Right lobe of liver (tissue), 6 donors: ENCODE measurements at regions of chr19 and their contacts with region 1.

Region 1: DNA sequence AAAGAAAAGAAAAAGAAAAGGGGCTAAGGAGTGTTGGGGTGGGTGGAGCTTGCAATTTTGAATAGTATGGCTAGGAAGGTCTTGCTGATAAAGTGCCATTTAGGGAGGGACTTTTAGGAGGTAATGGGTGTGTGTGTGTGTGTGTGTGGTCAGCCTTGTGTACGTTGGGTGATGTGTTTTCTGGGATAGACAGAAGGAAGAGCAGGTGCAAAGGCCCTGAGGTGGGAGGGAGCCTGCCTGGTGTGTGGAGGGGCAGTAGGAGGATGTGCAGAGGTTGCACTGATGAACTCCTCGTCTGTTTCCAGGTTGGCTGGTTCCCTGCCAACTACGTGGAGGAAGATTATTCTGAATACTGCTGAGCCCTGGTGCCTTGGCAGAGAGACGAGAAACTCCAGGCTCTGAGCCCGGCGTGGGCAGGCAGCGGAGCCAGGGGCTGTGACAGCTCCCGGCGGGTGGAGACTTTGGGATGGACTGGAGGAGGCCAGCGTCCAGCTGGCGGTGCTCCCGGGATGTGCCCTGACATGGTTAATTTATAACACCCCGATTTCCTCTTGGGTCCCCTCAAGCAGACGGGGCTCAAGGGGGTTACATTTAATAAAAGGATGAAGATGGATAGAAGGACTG is 30.5 kb upstream of the ADGRE1 start:
- DNase-seq: no peak
- ATAC-seq: peak in 3 of 4 donors; percentile 13 to 37 (median 14)
- H3K4me3 ChIP-seq: no peak overlapping the region
- H3K27ac ChIP-seq: no peak overlapping the region
- H3K4me1 ChIP-seq: no peaks in the 10 kb centered on the region
- H3K27me3 ChIP-seq: no peaks in the 10 kb centered on the region
- CTCF ChIP-seq: no peak
- POLR2A ChIP-seq: no peak

Region 2: DNA sequence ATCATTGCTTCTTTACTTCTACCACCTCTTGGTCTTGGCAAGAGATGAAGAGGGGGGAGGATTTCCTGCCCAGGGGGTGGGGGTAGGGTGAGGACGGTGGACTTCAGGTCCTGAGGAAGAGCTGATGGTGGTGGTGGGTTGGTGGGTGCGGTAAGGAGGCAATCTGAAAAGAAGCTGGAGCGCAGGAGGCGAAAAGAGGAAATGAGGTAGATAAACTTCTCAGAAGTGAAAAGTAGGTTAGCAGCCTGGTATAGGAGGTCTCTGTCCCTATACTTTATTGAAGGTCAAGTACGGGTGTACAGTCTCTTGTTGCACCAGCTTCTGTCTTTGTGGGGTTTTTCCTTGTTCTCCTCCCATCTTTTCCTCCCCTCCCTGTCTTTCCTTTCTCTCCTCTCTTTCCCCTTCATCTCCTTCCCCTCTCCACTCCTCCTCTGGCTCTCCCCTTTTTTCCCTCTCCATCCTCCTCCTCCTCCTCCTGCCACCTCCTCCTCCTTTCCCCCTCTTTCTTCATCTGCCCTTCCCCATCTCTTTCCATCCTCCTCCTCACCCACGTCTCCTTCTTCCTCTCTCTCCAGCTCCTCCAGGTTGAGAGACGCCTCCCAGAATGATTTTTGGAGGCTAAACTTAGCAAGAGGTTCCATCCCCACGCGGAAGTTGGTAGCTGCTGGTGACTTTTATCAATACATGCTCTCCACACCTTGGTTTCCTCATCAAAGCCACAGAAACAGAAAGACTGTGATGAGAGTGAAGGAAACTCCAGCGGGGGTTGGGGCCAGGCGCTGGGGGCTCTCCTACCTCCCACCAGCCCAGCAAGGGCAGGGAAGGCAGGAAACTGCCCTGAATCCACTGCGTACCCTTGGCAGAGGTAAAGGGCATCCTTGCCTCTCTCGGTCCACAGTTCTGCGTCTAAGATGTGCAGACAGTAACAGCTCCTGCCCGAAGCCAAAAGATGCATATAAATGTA is 202.2 kb before region 1 on chr19:
- intact Hi-C with region 1: loop called in 1 of 2 experiments (anchors 10 kb)
- DNase-seq: no peak
- ATAC-seq: peak in 3 of 4 donors; percentile 27 to 38 (median 36)
- H3K4me3 ChIP-seq: no peak overlapping the region
- H3K27ac ChIP-seq: no peak overlapping the region
- H3K4me1 ChIP-seq: no peaks in the 10 kb centered on the region
- H3K27me3 ChIP-seq: no peaks in the 10 kb centered on the region
- CTCF ChIP-seq: no peak
- POLR2A ChIP-seq: no peak

Region 3: GRCh38 chr19:6737284-6738046 is 119.4 kb before region 1 on chr19 and contains the start of gene GPR108:
- intact Hi-C with region 1: loop called (anchors 10 kb)
- DNase-seq: peak; percentile 99 to 100 (median 100)
- ATAC-seq: peak; percentile 60 to 83 (median 76)
- H3K4me3 ChIP-seq: peak within 1 kb of the TSS; percentile 82 to 96 (median 94)
- H3K27ac ChIP-seq: peak within 1 kb of the TSS; percentile 84 to 97 (median 95)
- H3K4me1 ChIP-seq: peaks cover 4 to 35% (median 18%) of the 10 kb centered on the region in 4 donors
- H3K27me3 ChIP-seq: no peaks in the 10 kb centered on the region
- CTCF ChIP-seq: no peak
- POLR2A ChIP-seq: peak; percentile 65
- total RNA-seq, gene GPR108: 22.3 to 53.0 (median 41.3) TPM

Region 4: DNA sequence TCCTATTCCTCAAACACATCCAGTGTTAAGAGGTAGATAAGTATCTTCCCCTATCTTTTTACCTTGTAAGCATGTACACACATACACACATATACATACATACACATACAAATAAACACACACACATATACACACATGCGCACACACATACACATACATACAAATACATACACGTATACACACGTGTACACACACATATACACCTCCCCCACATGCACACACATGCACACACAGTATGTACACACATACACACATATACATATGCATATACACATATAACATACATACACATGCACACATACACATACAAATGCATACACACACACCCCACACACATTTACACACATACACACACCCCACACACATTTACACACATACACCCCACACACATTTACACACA is 54.7 kb after region 1 on chr19:
- intact Hi-C with region 1: no loop called
- DNase-seq: no peak
- ATAC-seq: no peak
- H3K4me3 ChIP-seq: no peak overlapping the region
- H3K27ac ChIP-seq: no peak overlapping the region
- H3K4me1 ChIP-seq: no peaks in the 10 kb centered on the region
- H3K27me3 ChIP-seq: no peaks in the 10 kb centered on the region
- CTCF ChIP-seq: no peak
- POLR2A ChIP-seq: no peak